ENCODE measurements at regions of chr20 and their contacts with region 1.

Region 1: DNA sequence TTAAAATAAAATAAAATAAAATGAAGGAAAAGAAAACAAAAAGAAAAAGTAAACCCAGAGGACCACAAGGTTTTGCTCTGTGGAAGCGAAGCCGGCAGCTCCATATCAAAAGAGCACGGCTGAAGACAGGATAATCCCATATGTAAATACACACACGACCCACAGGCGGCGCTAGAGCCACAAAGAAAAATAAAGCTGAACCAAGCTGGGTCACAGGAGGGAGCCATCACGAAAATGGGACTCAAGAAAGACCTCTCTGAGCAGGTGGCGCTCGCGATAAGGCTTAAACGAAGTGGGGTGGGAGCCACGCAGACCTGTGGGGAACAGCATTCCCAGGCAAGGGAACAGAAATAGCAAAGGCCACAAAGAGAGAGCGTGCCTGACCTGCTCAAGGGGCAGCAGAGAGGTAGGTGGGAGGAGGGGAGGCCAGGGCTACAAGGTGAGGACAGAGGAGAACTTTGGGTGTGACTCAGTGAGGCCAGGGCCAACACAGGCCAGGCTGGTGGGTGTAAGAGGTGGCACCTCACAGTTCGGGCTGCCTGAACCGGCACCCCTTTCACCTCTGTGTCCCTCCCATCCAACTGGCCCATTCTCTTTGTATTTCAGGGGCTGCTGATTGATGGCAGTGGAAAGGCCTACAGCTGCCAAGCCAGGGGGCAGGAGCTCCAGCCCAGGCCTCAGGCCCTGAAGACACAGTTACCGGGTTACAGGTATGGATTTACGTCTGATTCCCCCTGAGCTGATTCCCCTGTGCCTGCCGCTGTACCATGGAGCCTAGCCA is 26.0 kb downstream of the PTGIS start:
- DNase-seq: peak; percentile 82
- H3K4me3 ChIP-seq: no peak overlapping the region
- H3K27ac ChIP-seq: no peak overlapping the region
- H3K4me1 ChIP-seq: no peaks in the 10 kb centered on the region
- H3K27me3 ChIP-seq: no peaks in the 10 kb centered on the region
- CTCF ChIP-seq: peak; percentile 73 to 82
- POLR2A ChIP-seq: no peak

Region 2: DNA sequence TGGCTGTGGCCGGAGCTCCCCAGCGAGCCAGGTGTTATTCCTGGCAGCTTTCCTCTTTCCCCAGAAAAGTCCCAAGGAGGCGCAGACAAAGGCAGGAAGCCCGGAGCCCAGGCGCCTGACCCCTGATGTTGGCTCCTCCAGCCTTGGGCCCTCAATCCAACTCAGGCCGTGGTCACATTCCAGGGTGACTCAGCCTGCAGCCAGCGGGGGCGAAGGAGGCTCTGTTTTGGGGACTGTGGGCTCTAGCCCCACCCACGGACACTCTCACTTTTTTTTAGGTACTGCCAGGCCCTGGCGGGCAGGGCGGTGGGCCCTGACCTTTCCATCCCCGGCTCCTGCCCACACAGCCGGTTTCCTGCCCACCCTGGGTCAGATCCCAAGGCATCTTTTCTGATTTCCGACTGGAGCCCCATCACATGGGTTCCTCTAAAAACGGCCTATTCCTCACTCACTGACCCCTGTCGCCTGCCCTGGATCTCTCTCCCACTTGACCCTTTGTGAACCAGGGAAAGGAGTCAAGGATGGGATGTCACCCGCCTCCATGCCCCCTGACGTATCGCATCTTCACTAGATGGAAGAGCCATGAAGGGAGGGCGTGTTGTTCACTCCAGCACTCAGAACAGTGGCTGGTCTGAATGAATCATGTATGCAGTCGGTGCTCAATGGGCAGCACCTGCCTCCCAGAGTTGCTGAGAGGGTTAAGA is 20.5 kb after region 1 on chr20:
- CTCF ChIA-PET with region 1: interaction called, 48 read pairs
- POLR2A ChIA-PET with region 1: no interaction called
- dilution Hi-C with region 1: no loop called
- intact Hi-C with region 1: loop called (anchors 1 kb)
- DNase-seq: peak; percentile 96
- H3K4me3 ChIP-seq: no peak overlapping the region
- H3K27ac ChIP-seq: peak overlapping the region; percentile 79
- H3K4me1 ChIP-seq: peaks cover 47% of the 10 kb centered on the region
- H3K27me3 ChIP-seq: no peaks in the 10 kb centered on the region
- CTCF ChIP-seq: no peak
- POLR2A ChIP-seq: peak; percentile 26

Region 3: GRCh38 chr20:49578436-49578835 is 36.5 kb after region 1 on chr20:
- CTCF ChIA-PET with region 1: interaction called, 45 read pairs
- POLR2A ChIA-PET with region 1: no interaction called
- dilution Hi-C with region 1: no loop called
- intact Hi-C with region 1: no loop called
- DNase-seq: no peak
- H3K4me3 ChIP-seq: no peak overlapping the region
- H3K27ac ChIP-seq: no peak overlapping the region
- H3K4me1 ChIP-seq: no peaks in the 10 kb centered on the region
- H3K27me3 ChIP-seq: no peaks in the 10 kb centered on the region
- CTCF ChIP-seq: no peak
- POLR2A ChIP-seq: no peak

Region 4: GRCh38 chr20:49603209-49603627 is 61.3 kb after region 1 on chr20:
- CTCF ChIA-PET with region 1: interaction called, 962 read pairs
- POLR2A ChIA-PET with region 1: no interaction called
- dilution Hi-C with region 1: no loop called
- intact Hi-C with region 1: loop called (anchors 1 kb)
- DNase-seq: peak; percentile 39
- H3K4me3 ChIP-seq: no peak overlapping the region
- H3K27ac ChIP-seq: no peak overlapping the region
- H3K4me1 ChIP-seq: no peaks in the 10 kb centered on the region
- H3K27me3 ChIP-seq: no peaks in the 10 kb centered on the region
- CTCF ChIP-seq: peak; percentile 44 to 61
- POLR2A ChIP-seq: no peak

Region 5: GRCh38 chr20:49928401-49929141 is 386.6 kb after region 1 on chr20:
- CTCF ChIA-PET with region 1: no interaction called
- POLR2A ChIA-PET with region 1: no interaction called
- dilution Hi-C with region 1: no loop called
- intact Hi-C with region 1: loop called (anchors 2 kb)
- DNase-seq: peak; percentile 87
- H3K4me3 ChIP-seq: no peak overlapping the region
- H3K27ac ChIP-seq: no peak overlapping the region
- H3K4me1 ChIP-seq: peaks cover 3% of the 10 kb centered on the region
- H3K27me3 ChIP-seq: no peaks in the 10 kb centered on the region
- CTCF ChIP-seq: peak; percentile 84 to 93
- POLR2A ChIP-seq: no peak

Measured in endothelial cell of umbilical vein (primary cell).